Activated CD4-positive, alpha-beta memory T cell treated with anti-CD3 and anti-CD28 coated beads for 36 hours (primary cell): ENCODE measurements at regions of chr11 and their contacts with region 1.

Region 1: GRCh38 chr11:67317205-67317887 is 14.0 kb downstream of the SSH3 start:
- DNase-seq: peak; percentile 99
- H3K4me3 Mint-ChIP-seq: peak overlapping the region; percentile 96
- H3K27ac Mint-ChIP-seq: peak overlapping the region; percentile 99
- H3K4me1 Mint-ChIP-seq: peaks cover 28% of the 10 kb centered on the region
- H3K27me3 Mint-ChIP-seq: no peaks in the 10 kb centered on the region

Region 2: DNA sequence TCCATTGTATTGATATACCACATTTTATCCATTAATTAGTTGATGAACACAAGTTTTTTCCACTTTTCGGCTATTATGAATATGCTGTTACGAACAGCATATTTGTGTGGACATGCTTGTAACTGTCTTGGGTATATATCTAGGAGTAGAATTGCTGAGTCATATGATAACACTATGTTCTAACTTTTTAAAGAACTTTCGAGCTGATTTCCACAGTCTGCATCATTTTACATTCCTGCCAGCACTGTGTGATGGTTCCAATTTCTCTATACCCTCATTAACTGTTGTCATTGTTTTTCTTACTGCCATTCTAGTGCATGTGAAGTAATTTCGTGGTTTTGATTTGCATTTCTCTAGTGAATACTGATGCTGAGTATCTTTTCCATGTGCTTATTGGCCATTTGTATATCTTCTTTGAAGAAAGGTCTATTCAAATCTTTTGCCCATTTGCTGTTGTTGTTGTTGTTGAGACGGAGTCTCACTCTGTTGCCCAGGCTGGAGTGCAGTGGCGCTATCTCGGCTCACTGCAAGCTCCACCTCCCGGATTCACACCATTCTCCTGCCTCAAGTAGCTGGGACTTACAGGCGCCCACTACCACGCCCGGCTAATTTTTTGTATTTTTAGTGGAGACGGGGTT is 481.5 kb before region 1 on chr11:
- CTCF ChIA-PET with region 1: no interaction called
- POLR2A ChIA-PET with region 1: no interaction called
- intact Hi-C with region 1: no loop called
- DNase-seq: no peak
- H3K4me3 Mint-ChIP-seq: no peak overlapping the region
- H3K27ac Mint-ChIP-seq: no peak overlapping the region
- H3K4me1 Mint-ChIP-seq: peaks cover 22% of the 10 kb centered on the region
- H3K27me3 Mint-ChIP-seq: no peaks in the 10 kb centered on the region

Region 3: GRCh38 chr11:67239783-67240575 is 77.4 kb before region 1 on chr11:
- CTCF ChIA-PET with region 1: interaction called, 12 read pairs
- POLR2A ChIA-PET with region 1: interaction called, 13 read pairs
- intact Hi-C with region 1: loop called (anchors 1 kb)
- DNase-seq: peak; percentile 99
- H3K4me3 Mint-ChIP-seq: peak overlapping the region; percentile 97
- H3K27ac Mint-ChIP-seq: peak overlapping the region; percentile 100
- H3K4me1 Mint-ChIP-seq: peaks cover 43% of the 10 kb centered on the region
- H3K27me3 Mint-ChIP-seq: no peaks in the 10 kb centered on the region

Region 4: GRCh38 chr11:67265633-67266423 is 51.5 kb before region 1 on chr11:
- CTCF ChIA-PET with region 1: interaction called, 150 read pairs
- POLR2A ChIA-PET with region 1: interaction called, 15 read pairs
- intact Hi-C with region 1: loop called (anchors 1 kb)
- DNase-seq: peak; percentile 84
- H3K4me3 Mint-ChIP-seq: peak overlapping the region; percentile 63
- H3K27ac Mint-ChIP-seq: peak overlapping the region; percentile 80
- H3K4me1 Mint-ChIP-seq: peaks cover 72% of the 10 kb centered on the region
- H3K27me3 Mint-ChIP-seq: no peaks in the 10 kb centered on the region

Region 5: GRCh38 chr11:67288452-67289225 is 28.7 kb before region 1 on chr11:
- CTCF ChIA-PET with region 1: interaction called, 18 read pairs
- POLR2A ChIA-PET with region 1: interaction called, 10 read pairs
- intact Hi-C with region 1: loop called (anchors 1 kb)
- DNase-seq: peak; percentile 95
- H3K4me3 Mint-ChIP-seq: peak overlapping the region; percentile 66
- H3K27ac Mint-ChIP-seq: peak overlapping the region; percentile 97
- H3K4me1 Mint-ChIP-seq: peaks cover 62% of the 10 kb centered on the region
- H3K27me3 Mint-ChIP-seq: no peaks in the 10 kb centered on the region

Region 6: DNA sequence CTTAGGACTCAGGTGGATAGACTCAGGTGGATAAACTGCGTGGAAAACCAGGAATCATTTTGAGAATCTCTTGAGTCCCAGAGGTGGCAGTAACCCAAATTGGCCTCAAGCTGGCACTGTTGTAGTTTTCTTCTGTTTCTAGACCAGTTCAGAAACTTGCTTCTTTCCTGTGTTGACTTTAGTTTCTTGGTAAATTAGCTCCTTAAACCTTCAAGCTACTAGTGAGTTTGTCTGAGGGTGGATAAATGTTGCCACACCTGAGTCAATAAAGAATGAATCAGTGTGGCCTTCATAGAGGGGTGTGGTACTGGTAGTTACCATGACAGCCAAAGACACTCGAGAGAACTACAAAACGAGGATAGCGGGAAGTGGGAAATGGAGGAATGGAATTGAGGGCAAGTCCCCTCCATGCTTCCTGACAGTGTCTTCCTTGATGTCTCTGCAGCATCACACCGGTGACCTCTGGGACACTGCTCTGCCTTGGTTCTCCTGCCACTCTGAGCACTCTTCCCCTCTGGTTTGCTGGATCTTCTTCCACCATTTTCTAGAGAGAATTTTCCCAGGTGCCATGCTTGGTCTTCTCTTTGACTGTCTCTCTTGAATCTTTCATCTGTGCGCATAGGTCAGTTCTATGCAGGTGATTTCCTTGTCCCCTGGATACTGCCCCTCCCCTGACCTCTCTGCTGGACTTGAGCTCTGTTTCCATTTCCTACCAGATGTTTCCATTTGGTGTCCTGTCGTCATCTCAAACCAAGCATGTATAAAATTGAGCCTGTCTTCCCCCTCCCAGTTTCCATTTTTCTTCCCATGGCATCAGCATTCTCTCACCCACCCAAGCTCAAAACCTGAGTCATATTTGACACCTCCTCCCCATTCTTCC is 28.8 kb after region 1 on chr11:
- CTCF ChIA-PET with region 1: interaction called, 32 read pairs
- POLR2A ChIA-PET with region 1: no interaction called
- intact Hi-C with region 1: no loop called
- DNase-seq: peak; percentile 49
- H3K4me3 Mint-ChIP-seq: no peak overlapping the region
- H3K27ac Mint-ChIP-seq: peak overlapping the region; percentile 83
- H3K4me1 Mint-ChIP-seq: peaks cover 47% of the 10 kb centered on the region
- H3K27me3 Mint-ChIP-seq: no peaks in the 10 kb centered on the region

Region 7: GRCh38 chr11:67391304-67392132 is 74.2 kb after region 1 on chr11 and contains the start of gene RAD9A:
- CTCF ChIA-PET with region 1: interaction called, 10 read pairs
- POLR2A ChIA-PET with region 1: interaction called, 3 read pairs
- intact Hi-C with region 1: no loop called
- DNase-seq: peak; percentile 95
- H3K4me3 Mint-ChIP-seq: peak within 1 kb of the TSS; percentile 92
- H3K27ac Mint-ChIP-seq: peak within 1 kb of the TSS; percentile 76
- H3K4me1 Mint-ChIP-seq: peaks cover 33% of the 10 kb centered on the region
- H3K27me3 Mint-ChIP-seq: no peaks in the 10 kb centered on the region
- total RNA-seq, gene RAD9A: 31.0 to 39.1 TPM

Region 8: GRCh38 chr11:67705264-67705663 is 387.9 kb after region 1 on chr11:
- CTCF ChIA-PET with region 1: no interaction called
- POLR2A ChIA-PET with region 1: no interaction called
- intact Hi-C with region 1: no loop called
- DNase-seq: no peak
- H3K4me3 Mint-ChIP-seq: no peak overlapping the region
- H3K27ac Mint-ChIP-seq: no peak overlapping the region
- H3K4me1 Mint-ChIP-seq: no peaks in the 10 kb centered on the region
- H3K27me3 Mint-ChIP-seq: peaks cover 13% of the 10 kb centered on the region